GM12878 (cell line): ENCODE measurements at regions of chr15 and their contacts with region 1.

Region 1: DNA sequence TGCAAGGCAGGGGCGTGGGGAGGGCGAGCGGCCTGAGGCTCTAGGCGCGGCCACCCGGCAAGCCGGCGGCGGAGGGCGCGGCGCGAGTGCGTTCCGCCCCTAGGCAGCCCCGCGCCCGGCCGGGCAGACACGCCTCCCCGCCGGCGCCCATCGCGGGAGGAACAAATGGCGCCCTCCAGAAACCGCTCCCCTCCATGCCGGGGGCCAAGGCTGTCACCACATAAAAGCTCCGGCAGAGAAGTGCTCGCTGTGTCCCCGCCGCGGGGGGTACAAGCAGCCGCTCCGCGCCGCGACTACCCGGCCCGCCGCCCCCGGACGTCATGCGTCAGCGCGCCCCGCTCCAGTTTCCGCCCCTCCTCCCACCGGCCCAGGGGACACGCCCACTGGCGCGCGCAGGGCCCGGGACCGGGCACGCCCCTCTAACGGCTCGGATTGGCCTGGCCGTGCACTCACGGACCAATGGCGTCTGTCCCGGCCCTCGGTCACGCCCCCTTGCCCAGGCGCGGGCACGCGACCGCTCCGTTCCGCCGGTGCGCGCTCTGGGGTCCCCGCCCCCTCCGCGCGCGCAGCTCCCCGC is 391 bp upstream of the KLF13 start:
- DNase-seq: peak; percentile 92
- ATAC-seq: peak; percentile 78
- H3K4me3 ChIP-seq: peak overlapping the region; percentile 79
- H3K27ac ChIP-seq: peak overlapping the region; percentile 97
- H3K4me1 ChIP-seq: peaks cover 33% of the 10 kb centered on the region
- H3K27me3 ChIP-seq: no peaks in the 10 kb centered on the region
- CTCF ChIP-seq: no peak
- EP300 ChIP-seq: peak in 1 of 2 experiments; percentile 23; a peak in 2 of 4 replicates
- POLR2A ChIP-seq: peak; percentile 75
- RAD21 ChIP-seq: peak; percentile 22; the same call in 1 of the 2 replicates

Region 2: GRCh38 chr15:30903497-30904201 is 422.6 kb before region 1 on chr15 and contains the start of gene FAN1:
- CTCF ChIA-PET with region 1: no interaction called
- POLR2A ChIA-PET with region 1: no interaction called
- RAD21 ChIA-PET with region 1: no interaction called
- SMC1A ChIA-PET with region 1: no interaction called
- in situ Hi-C with region 1: no loop called
- intact Hi-C with region 1: loop called (anchors 10 kb)
- DNase-seq: peak; percentile 77
- ATAC-seq: peak; percentile 94
- H3K4me3 ChIP-seq: peak within 1 kb of the TSS; percentile 73
- H3K27ac ChIP-seq: peak within 1 kb of the TSS; percentile 68
- H3K4me1 ChIP-seq: no peaks in the 10 kb centered on the region
- H3K27me3 ChIP-seq: no peaks in the 10 kb centered on the region
- CTCF ChIP-seq: no peak
- EP300 ChIP-seq: no peak
- POLR2A ChIP-seq: peak; percentile 93
- RAD21 ChIP-seq: no peak
- polyA plus RNA-seq, gene FAN1: 0.55 to 1.0 TPM

Region 3: DNA sequence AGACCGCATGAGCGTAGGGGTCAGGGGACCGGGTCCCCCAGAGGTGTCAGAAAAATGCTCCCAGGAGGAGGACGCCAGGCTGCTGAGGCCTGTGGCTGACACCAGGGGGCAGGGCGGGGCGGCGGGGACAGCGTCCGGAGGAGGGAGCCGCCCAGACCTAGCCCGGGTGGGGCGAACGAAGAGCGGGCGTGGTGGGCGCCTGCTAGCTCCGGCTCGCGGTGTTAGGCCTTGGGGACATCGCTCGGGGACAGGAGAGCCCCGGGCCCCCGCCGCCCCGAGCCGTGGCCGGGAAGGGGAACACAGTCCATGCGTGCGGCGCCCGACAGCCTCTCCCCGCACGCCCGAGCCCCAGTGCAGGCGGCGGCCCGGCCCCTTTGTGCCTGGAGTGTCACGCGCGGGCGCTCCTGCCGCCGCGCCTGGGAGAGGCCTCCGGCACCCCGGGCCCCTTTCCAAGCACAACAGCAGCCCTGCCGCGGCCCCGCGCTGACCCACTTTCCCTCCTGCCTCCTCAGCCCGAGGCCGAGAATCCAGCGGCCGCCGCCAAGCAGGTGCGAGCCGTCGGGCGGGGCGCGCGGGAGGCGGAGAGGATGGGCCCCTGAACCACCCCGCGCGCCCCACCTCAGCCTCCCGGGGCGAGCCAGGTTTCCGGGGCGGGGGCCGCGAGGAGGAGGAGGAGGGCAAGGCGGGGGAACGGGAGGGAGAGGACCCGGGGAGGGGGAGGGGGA is 110.6 kb before region 1 on chr15:
- CTCF ChIA-PET with region 1: interaction called, 10 read pairs
- POLR2A ChIA-PET with region 1: interaction called, 8 read pairs
- RAD21 ChIA-PET with region 1: interaction called, 27 read pairs
- SMC1A ChIA-PET with region 1: interaction called, 19 read pairs
- in situ Hi-C with region 1: no loop called
- intact Hi-C with region 1: loop called (anchors 1 kb)
- DNase-seq: no peak
- ATAC-seq: peak; percentile 91
- H3K4me3 ChIP-seq: peak overlapping the region; percentile 79
- H3K27ac ChIP-seq: peak overlapping the region; percentile 87
- H3K4me1 ChIP-seq: peaks cover 10% of the 10 kb centered on the region
- H3K27me3 ChIP-seq: no peaks in the 10 kb centered on the region
- CTCF ChIP-seq: peak; percentile 80 to 89 (median 89)
- EP300 ChIP-seq: no peak
- POLR2A ChIP-seq: peak; percentile 71
- RAD21 ChIP-seq: peak; percentile 88

Region 4: DNA sequence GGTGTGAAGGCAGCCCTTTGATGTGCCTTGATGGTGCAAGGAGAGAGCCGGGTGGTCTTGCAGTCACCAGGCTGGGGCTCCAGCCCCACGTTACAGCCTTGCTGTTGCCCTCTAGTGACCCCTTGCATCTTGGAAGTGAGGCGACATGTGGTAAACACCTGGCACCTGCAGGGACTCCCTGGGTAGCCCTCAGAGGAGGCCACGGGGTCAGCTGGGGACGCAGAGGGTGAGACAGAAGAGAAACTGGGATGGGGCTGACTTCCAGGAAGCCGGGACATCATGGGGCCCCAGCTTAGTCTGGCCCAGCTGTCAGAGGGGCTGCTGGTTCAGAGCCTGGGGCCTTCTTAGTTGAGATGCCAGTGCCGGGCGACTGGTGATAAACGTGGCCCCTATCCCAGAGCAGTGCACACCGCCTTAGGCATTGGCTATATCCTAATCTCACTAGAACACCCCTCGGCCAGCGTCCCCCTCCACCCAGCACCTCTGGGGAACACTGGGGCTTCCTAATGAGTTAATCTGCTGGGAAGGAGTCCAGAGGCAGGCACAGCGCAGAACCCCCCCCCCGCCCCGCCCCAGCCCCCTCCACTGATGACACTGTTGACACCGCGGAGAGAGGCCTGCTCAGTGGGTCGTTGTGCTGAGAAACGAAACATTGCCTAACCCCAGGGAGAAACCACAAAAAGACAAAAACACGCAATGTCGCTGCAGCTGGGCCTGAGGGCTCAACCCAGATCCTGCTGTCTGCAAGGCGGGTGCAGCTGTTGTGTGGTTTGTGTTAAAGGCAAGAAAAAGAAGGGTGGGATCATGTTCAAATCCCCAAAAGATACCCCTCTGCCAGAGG is 60.2 kb before region 1 on chr15:
- CTCF ChIA-PET with region 1: interaction called, 35 read pairs
- POLR2A ChIA-PET with region 1: interaction called, 112 read pairs
- RAD21 ChIA-PET with region 1: interaction called, 109 read pairs
- SMC1A ChIA-PET with region 1: interaction called, 83 read pairs
- in situ Hi-C with region 1: loop called (anchors 10 kb)
- intact Hi-C with region 1: loop called (anchors 1 kb)
- DNase-seq: peak; percentile 86
- ATAC-seq: peak; percentile 65
- H3K4me3 ChIP-seq: peak overlapping the region; percentile 41; the same call in 1 of the 2 replicates
- H3K27ac ChIP-seq: peak overlapping the region; percentile 94
- H3K4me1 ChIP-seq: peaks cover 63% of the 10 kb centered on the region
- H3K27me3 ChIP-seq: no peaks in the 10 kb centered on the region
- CTCF ChIP-seq: 0 out of 6 replicates have a peak, but pooled peaks of 1 of the 3 experiments have one; percentile 6
- EP300 ChIP-seq: peak; percentile 89 to 93; a peak in 3 of 4 replicates
- POLR2A ChIP-seq: no peak; the same call in 1 of the 2 replicates
- RAD21 ChIP-seq: peak; percentile 32

Region 5: GRCh38 chr15:31308185-31308639 is 18.0 kb before region 1 on chr15:
- CTCF ChIA-PET with region 1: interaction called, 3 read pairs
- POLR2A ChIA-PET with region 1: interaction called, 12 read pairs
- RAD21 ChIA-PET with region 1: interaction called, 10 read pairs
- SMC1A ChIA-PET with region 1: interaction called, 7 read pairs
- in situ Hi-C with region 1: no loop called
- intact Hi-C with region 1: no loop called
- DNase-seq: no peak
- ATAC-seq: peak; percentile 66
- H3K4me3 ChIP-seq: no peak overlapping the region
- H3K27ac ChIP-seq: no peak overlapping the region
- H3K4me1 ChIP-seq: peaks cover 22% of the 10 kb centered on the region
- H3K27me3 ChIP-seq: no peaks in the 10 kb centered on the region; a peak in 1 of 4 replicates
- CTCF ChIP-seq: no peak
- EP300 ChIP-seq: no peak
- POLR2A ChIP-seq: no peak
- RAD21 ChIP-seq: peak; percentile 45

Region 6: DNA sequence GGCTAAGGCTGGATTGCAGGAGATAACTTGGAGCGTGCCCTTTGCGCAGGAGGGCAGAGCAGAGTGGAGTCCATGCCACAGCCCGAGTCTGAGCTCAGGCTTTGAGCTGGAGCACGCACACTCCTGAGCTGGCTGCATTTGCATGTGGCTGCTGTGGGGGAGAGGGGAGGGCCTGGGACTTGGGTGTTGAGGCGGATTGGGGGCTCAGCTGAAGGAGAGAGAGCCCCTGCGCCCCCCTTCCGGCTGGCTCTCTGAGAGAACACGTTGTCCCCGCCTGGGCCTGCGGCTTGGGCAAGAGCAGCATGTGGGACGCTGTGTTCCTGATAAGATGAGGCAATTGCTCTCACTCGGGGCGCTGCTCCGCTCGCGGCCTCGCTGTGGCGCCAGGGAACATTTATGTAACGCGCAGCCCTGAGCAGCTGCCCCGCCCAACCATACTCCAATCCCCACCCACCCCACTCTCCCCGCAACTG is 39.4 kb after region 1 on chr15:
- CTCF ChIA-PET with region 1: interaction called, 5 read pairs
- POLR2A ChIA-PET with region 1: interaction called, 3 read pairs
- RAD21 ChIA-PET with region 1: interaction called, 9 read pairs
- SMC1A ChIA-PET with region 1: interaction called, 9 read pairs
- in situ Hi-C with region 1: no loop called
- intact Hi-C with region 1: loop called (anchors 2 kb)
- DNase-seq: no peak
- ATAC-seq: peak; percentile 81
- H3K4me3 ChIP-seq: peak overlapping the region; percentile 20; the same call in 1 of the 2 replicates
- H3K27ac ChIP-seq: peak overlapping the region; percentile 41
- H3K4me1 ChIP-seq: peaks cover 75% of the 10 kb centered on the region
- H3K27me3 ChIP-seq: no peaks in the 10 kb centered on the region
- CTCF ChIP-seq: peak; percentile 32 to 57 (median 50); a peak in 4 of 6 replicates
- EP300 ChIP-seq: no peak
- POLR2A ChIP-seq: no peak
- RAD21 ChIP-seq: 0 out of 2 replicates have a peak, but pooled peaks have one; percentile 38

Region 7: GRCh38 chr15:31526916-31527690 is 200.9 kb after region 1 on chr15:
- CTCF ChIA-PET with region 1: no interaction called
- POLR2A ChIA-PET with region 1: no interaction called
- RAD21 ChIA-PET with region 1: no interaction called
- SMC1A ChIA-PET with region 1: no interaction called
- in situ Hi-C with region 1: no loop called
- intact Hi-C with region 1: no loop called
- DNase-seq: no peak
- ATAC-seq: no peak
- H3K4me3 ChIP-seq: no peak overlapping the region
- H3K27ac ChIP-seq: no peak overlapping the region
- H3K4me1 ChIP-seq: no peaks in the 10 kb centered on the region
- H3K27me3 ChIP-seq: no peaks in the 10 kb centered on the region; a peak in 1 of 4 replicates
- CTCF ChIP-seq: no peak
- EP300 ChIP-seq: no peak
- POLR2A ChIP-seq: no peak
- RAD21 ChIP-seq: no peak